ENCODE measurements at regions of chr11 and their contacts with region 1.

Region 1: GRCh38 chr11:33687733-33688479 is 12.7 kb downstream of the C11orf91 start:
- DNase-seq: peak; percentile 75
- H3K4me3 ChIP-seq: no peak overlapping the region
- H3K27ac ChIP-seq: no peak overlapping the region
- H3K4me1 ChIP-seq: peaks cover 44% of the 10 kb centered on the region
- H3K27me3 ChIP-seq: no peaks in the 10 kb centered on the region
- CTCF ChIP-seq: peak; percentile 51 to 74
- POLR2A ChIP-seq: no peak

Region 2: GRCh38 chr11:33161120-33162005 is 526.5 kb before region 1 on chr11 and contains the start of gene CSTF3:
- CTCF ChIA-PET with region 1: interaction called, 25 read pairs
- POLR2A ChIA-PET with region 1: no interaction called
- dilution Hi-C with region 1: no loop called
- intact Hi-C with region 1: loop called (anchors 1 kb)
- DNase-seq: peak; percentile 99
- H3K4me3 ChIP-seq: peak within 1 kb of the TSS; percentile 62 to 100 (median 100)
- H3K27ac ChIP-seq: peak within 1 kb of the TSS; percentile 92
- H3K4me1 ChIP-seq: peaks cover 23% of the 10 kb centered on the region
- H3K27me3 ChIP-seq: no peaks in the 10 kb centered on the region
- CTCF ChIP-seq: peak; percentile 18 to 38
- POLR2A ChIP-seq: peak; percentile 95
- total RNA-seq, gene CSTF3: 46.6 and 52.3 TPM in 2 replicates

Region 3: DNA sequence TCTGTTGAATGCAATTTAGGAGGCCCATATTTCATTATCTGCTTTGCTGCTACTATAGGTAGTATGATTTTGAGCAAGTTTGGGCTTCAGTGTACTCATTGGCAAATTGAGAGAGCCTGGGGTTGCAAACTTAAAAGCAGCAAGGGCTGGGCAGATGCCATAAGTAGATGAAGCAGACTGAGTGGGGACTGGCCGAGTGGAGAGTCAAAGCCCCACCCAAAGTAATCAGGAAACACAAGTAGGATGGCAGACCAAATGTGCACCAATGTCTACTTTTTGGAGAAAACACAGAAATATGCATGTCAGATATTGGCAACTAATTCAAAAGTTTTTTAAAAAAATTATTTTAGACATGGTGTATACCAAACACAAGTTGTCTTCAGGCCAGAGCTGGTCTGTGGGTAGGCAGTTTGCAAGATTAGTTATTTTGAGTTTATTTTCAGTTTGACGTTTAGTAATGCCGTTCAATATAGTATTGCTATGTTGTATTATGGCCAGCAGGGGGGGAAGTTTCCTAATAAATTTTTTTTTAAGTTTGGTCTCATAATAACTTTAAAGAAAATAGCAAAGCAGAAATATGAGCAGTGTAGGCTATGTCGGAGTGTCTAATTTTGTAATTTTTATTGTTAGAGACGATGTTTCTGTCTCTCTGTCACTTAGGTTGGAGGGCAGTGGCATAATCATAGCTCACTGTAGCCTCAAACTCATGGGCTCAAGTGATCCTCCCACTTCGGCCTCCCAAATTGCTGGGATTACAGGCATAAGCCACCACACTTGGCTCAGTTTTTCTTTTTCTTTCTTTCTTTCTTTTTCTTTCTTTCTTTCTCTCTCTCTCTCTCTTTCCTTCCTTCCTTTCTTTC is 325.6 kb before region 1 on chr11:
- CTCF ChIA-PET with region 1: interaction called, 107 read pairs
- POLR2A ChIA-PET with region 1: no interaction called
- dilution Hi-C with region 1: no loop called
- intact Hi-C with region 1: loop called (anchors 1 kb)
- DNase-seq: peak; percentile 65
- H3K4me3 ChIP-seq: no peak overlapping the region
- H3K27ac ChIP-seq: no peak overlapping the region
- H3K4me1 ChIP-seq: no peaks in the 10 kb centered on the region
- H3K27me3 ChIP-seq: no peaks in the 10 kb centered on the region
- CTCF ChIP-seq: peak; percentile 28 to 35
- POLR2A ChIP-seq: no peak

Region 4: DNA sequence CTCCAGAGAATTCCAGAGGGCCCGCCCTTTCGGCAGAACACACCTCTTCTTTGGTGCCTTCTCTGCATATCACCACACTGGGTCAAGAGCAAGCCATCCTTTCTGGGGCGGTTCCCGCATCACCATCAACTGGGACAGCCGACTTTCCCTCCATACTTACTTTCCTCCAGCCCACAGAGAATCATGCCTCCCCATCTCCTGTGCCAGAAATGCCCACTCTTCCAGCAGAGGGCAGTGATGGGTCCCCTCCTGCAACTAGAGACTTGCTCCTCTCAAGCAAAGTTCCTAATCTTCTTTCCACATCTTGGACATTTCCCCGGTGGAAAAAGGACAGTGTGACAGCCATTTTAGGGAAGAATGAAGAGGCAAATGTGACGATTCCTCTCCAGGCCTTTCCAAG is 145.0 kb before region 1 on chr11:
- CTCF ChIA-PET with region 1: interaction called, 40 read pairs
- POLR2A ChIA-PET with region 1: no interaction called
- dilution Hi-C with region 1: no loop called
- intact Hi-C with region 1: loop called (anchors 1 kb)
- DNase-seq: peak; percentile 72
- H3K4me3 ChIP-seq: no peak overlapping the region
- H3K27ac ChIP-seq: no peak overlapping the region
- H3K4me1 ChIP-seq: no peaks in the 10 kb centered on the region
- H3K27me3 ChIP-seq: no peaks in the 10 kb centered on the region
- CTCF ChIP-seq: peak; percentile 74 to 79
- POLR2A ChIP-seq: no peak

Region 5: GRCh38 chr11:33700425-33701271 is 12.7 kb after region 1 on chr11 and contains the start of gene C11orf91:
- CTCF ChIA-PET with region 1: interaction called, 64 read pairs
- POLR2A ChIA-PET with region 1: interaction called, 73 read pairs
- dilution Hi-C with region 1: no loop called
- intact Hi-C with region 1: loop called (anchors 1 kb)
- DNase-seq: peak; percentile 98
- H3K4me3 ChIP-seq: peak within 1 kb of the TSS in 2 of 3 experiments; percentile 8 to 38
- H3K27ac ChIP-seq: peak within 1 kb of the TSS; percentile 89
- H3K4me1 ChIP-seq: peaks cover 52% of the 10 kb centered on the region
- H3K27me3 ChIP-seq: no peaks in the 10 kb centered on the region
- CTCF ChIP-seq: no peak
- POLR2A ChIP-seq: peak; percentile 88
- total RNA-seq, gene C11orf91: 1.4 and 2.1 TPM in 2 replicates

Region 6: DNA sequence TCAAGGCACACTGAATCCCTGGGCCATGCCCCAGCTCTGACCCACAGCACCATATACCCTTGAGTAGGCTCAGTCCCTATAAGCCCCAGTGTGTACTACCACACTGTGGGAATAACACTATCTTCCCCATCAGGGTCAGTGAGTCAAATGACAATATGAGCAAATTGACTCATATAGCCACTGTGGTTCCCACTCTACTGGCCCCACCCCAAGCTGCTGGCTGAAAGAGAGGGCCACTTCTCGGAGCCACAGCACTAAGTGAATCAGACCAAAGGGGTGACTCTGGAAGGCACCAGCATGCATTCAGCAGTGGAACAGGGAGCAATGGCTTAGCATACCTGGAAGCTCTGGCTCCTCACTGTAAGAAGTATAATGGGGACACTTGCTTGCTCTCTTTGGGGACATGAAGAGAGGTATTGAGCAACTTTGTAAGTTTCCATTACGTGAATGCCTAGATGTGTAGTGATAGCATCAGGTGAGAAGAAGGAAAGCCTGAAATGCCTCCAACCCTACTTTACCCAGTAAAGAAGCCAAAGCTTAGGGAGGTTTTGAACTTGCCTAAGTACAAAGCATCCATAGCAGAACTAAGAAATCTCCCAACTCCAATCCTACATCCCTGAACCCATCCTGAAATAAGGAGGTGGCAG is 34.8 kb after region 1 on chr11:
- CTCF ChIA-PET with region 1: interaction called, 5 read pairs
- POLR2A ChIA-PET with region 1: interaction called, 4 read pairs
- dilution Hi-C with region 1: no loop called
- intact Hi-C with region 1: loop called (anchors 1 kb)
- DNase-seq: peak; percentile 69
- H3K4me3 ChIP-seq: no peak overlapping the region
- H3K27ac ChIP-seq: peak overlapping the region; percentile 99
- H3K4me1 ChIP-seq: peaks cover 60% of the 10 kb centered on the region
- H3K27me3 ChIP-seq: no peaks in the 10 kb centered on the region
- CTCF ChIP-seq: no peak
- POLR2A ChIP-seq: no peak

Region 7: DNA sequence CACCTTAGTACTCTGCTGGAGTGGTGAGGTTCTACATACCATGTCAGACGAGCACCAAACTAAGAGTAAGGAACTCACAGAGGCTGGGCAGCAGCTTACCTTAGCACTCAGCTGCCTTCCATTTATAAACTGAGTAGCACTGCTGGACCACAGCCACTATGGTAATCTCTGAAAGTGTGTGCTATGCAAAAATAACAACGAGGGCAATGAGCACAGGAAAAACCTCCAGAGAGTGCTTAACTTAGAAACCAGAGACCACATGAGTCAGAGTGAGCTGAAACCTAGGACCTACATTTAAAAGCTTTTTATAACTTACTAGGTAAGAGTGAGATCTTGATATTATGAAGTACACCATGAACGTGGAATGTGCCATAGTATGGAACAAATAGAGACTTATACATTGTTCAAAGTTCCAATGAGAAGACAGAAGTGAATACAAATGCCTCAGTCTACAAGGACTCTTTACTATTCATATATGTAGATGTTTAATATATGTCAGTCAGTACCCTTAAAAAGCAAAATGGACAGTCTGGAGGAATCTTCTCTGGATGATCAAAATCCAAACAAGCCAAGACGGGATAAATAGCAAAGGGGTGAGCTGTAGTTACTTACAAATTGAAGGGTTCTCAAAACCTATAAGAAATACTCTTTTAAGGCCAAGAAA is 65.5 kb after region 1 on chr11:
- CTCF ChIA-PET with region 1: no interaction called
- POLR2A ChIA-PET with region 1: no interaction called
- dilution Hi-C with region 1: no loop called
- intact Hi-C with region 1: no loop called
- DNase-seq: peak; percentile 59
- H3K4me3 ChIP-seq: no peak overlapping the region
- H3K27ac ChIP-seq: no peak overlapping the region
- H3K4me1 ChIP-seq: no peaks in the 10 kb centered on the region
- H3K27me3 ChIP-seq: no peaks in the 10 kb centered on the region
- CTCF ChIP-seq: no peak
- POLR2A ChIP-seq: no peak

Region 8: GRCh38 chr11:33829433-33830141 is 141.7 kb after region 1 on chr11:
- CTCF ChIA-PET with region 1: interaction called, 5 read pairs
- POLR2A ChIA-PET with region 1: no interaction called
- dilution Hi-C with region 1: no loop called
- intact Hi-C with region 1: loop called (anchors 1 kb)
- DNase-seq: peak; percentile 76
- H3K4me3 ChIP-seq: peak overlapping the region; percentile 0 to 29 (median 25)
- H3K27ac ChIP-seq: no peak overlapping the region
- H3K4me1 ChIP-seq: peaks cover 4% of the 10 kb centered on the region
- H3K27me3 ChIP-seq: peaks cover 17 to 19% of the 10 kb centered on the region in 2 experiments
- CTCF ChIP-seq: peak; percentile 74 to 81
- POLR2A ChIP-seq: no peak

Measured in endothelial cell of umbilical vein (primary cell).